HepG2 (cell line): ENCODE measurements at regions of chr13 and their contacts with region 1.

Region 1: GRCh38 chr13:52001120-52001731 is 10.0 kb downstream of the ATP7B start:
- DNase-seq: peak; percentile 59
- ATAC-seq: peak; percentile 11; the same call in 2 of the 3 replicates
- H3K4me3 ChIP-seq: no peak overlapping the region
- H3K27ac ChIP-seq: no peak overlapping the region
- H3K4me1 ChIP-seq: peaks cover 96% of the 10 kb centered on the region
- H3K27me3 ChIP-seq: no peaks in the 10 kb centered on the region
- CTCF ChIP-seq: peak; percentile 66
- EP300 ChIP-seq: no peak
- POLR2A ChIP-seq: no peak
- RAD21 ChIP-seq: no peak

Region 2: GRCh38 chr13:51978796-51979556 is 22.2 kb before region 1 on chr13:
- CTCF ChIA-PET with region 1: no interaction called
- POLR2A ChIA-PET with region 1: interaction called, 25 read pairs
- in situ Hi-C with region 1: no loop called
- intact Hi-C with region 1: no loop called
- DNase-seq: peak; percentile 90
- ATAC-seq: peak; percentile 97
- H3K4me3 ChIP-seq: peak overlapping the region in 1 of 3 experiments; percentile 14; a peak in 1 of 6 replicates
- H3K27ac ChIP-seq: peak overlapping the region; percentile 55
- H3K4me1 ChIP-seq: peaks cover 75% of the 10 kb centered on the region
- H3K27me3 ChIP-seq: no peaks in the 10 kb centered on the region
- CTCF ChIP-seq: no peak
- EP300 ChIP-seq: peak in 1 of 2 experiments; percentile 42; a peak in 1 of 4 replicates
- POLR2A ChIP-seq: no peak
- RAD21 ChIP-seq: no peak